AG04449 (cell line): ENCODE measurements at regions of chr1 and their contacts with region 1.

Region 1: DNA sequence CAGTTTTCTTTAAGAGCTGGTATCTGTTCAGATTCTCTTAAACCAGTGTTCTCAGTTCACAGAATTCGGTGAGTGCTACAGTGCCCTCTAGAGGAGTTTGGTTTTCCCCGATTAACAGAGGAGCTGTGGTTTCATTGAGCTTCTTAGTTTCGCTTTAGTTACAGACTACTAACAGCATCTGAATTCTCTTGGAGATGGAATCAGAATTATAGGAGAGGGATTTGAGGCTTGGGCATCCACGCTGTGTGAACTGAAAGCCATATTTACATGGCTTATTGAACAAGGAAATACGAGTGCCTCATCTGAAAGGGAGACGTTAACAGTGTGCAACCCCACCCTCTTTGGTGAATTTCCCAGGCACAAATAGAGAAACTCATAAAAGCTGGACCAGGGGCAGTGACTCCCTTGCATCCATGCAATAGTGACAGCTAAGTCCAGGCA is 202.0 kb downstream of the USH2A start:
- DNase-seq: peak; percentile 45
- H3K4me3 ChIP-seq: peak overlapping the region; percentile 53
- CTCF ChIP-seq: peak; percentile 65

Region 2: GRCh38 chr1:215992620-215993019 is 228.7 kb before region 1 on chr1:
- CTCF ChIA-PET with region 1: interaction called, 29 read pairs
- POLR2A ChIA-PET with region 1: no interaction called
- DNase-seq: no peak
- H3K4me3 ChIP-seq: no peak overlapping the region
- CTCF ChIP-seq: peak; percentile 42

Region 3: DNA sequence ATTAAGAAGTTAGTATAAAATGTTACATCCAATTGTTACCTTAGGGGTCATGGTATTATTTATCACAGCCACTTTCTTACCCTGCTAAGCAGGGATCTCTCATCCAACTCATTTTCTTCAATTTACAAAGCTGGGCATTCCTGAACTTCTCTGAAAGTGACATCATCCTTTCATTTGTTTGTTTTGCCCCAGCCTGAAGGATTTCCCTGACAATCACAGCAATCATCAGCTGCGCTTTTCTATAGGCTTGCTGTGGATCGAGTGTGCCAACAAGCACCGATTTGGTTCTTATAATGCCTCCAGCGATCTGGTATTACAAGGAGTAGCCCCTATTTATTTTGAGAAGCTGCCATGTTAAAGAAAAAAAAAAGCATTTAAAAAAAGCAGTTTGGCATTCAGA is 38.3 kb before region 1 on chr1:
- CTCF ChIA-PET with region 1: interaction called, 10 read pairs
- POLR2A ChIA-PET with region 1: no interaction called
- DNase-seq: peak; percentile 9
- H3K4me3 ChIP-seq: no peak overlapping the region
- CTCF ChIP-seq: no peak

Region 4: DNA sequence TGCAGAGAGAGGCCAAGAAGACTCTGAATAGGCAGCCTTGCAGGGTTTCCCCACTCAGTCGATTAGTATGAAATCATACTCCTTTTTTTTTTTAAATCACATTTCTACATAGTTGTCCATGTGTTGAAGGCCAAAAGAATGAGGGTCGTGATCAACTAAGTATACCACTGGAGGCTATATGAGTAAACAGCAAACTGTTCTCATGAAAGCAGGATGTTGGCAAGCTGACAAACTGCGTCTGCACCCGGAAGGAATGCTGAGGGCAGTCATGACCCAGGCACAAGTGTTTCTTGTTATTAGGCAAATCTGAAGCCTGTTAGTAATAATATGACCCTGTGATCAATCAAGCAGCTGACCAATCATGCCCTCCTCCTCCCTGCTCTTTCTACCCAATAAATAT is 11.2 kb before region 1 on chr1:
- CTCF ChIA-PET with region 1: interaction called, 51 read pairs
- POLR2A ChIA-PET with region 1: no interaction called
- DNase-seq: no peak
- H3K4me3 ChIP-seq: no peak overlapping the region
- CTCF ChIP-seq: no peak

Region 5: GRCh38 chr1:216566641-216567205 is 345.4 kb after region 1 on chr1:
- CTCF ChIA-PET with region 1: interaction called, 19 read pairs
- POLR2A ChIA-PET with region 1: no interaction called
- DNase-seq: peak; percentile 3
- H3K4me3 ChIP-seq: no peak overlapping the region
- CTCF ChIP-seq: peak; percentile 43